ENCODE measurements at regions of chr10 and their contacts with region 1.

Region 1: GRCh38 chr10:100046021-100046486 is 35.6 kb downstream of the CPN1 start:
- DNase-seq: peak; percentile 61 to 98 (median 86)
- ATAC-seq: peak; percentile 86 to 96 (median 92)
- H3K4me3 ChIP-seq: no peak overlapping the region
- H3K27ac ChIP-seq: no peak overlapping the region
- H3K4me1 ChIP-seq: no peaks in the 10 kb centered on the region
- H3K27me3 ChIP-seq: no peaks in the 10 kb centered on the region
- CTCF ChIP-seq: peak; percentile 88 to 98 (median 96)

Region 2: DNA sequence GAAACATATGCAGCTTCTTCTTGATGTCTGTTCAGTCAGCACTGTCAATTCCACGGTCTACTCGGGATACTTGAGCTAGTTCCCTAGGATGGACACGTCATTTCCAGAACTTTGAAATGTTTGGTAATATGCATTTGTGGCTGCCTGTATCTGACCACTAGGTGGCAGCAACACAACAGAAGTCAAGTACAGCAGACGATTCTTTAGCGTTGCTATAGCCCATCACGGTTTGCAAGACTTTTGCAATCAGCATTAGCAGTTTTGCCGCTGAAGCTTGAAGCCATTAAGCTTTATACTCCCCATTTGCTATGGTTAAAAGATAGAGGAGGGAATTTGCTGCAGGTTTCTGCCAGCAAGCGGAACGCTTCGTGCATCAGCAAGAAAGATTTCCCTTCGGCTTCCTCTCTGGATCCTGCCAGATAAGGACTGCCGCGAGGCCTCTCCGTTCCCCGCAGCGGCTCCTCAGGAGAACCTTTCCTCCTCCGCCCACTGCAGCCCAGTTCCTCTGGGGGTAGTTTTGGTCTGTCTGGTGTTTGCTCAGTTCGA is 200.1 kb before region 1 on chr10:
- intact Hi-C with region 1: loop called (anchors 2 to 10 kb)
- DNase-seq: peak in 5 of 6 donors; percentile 65 to 81 (median 67)
- ATAC-seq: peak; percentile 90 to 99 (median 97)
- H3K4me3 ChIP-seq: peak overlapping the region in 1 of 4 donors; percentile 24
- H3K27ac ChIP-seq: no peak overlapping the region
- H3K4me1 ChIP-seq: peaks cover 0 to 2% (median 0%) of the 10 kb centered on the region in 3 donors
- H3K27me3 ChIP-seq: no peaks in the 10 kb centered on the region
- CTCF ChIP-seq: peak; percentile 78 to 95 (median 90)

Region 3: GRCh38 chr10:100297242-100297641 is 251.2 kb after region 1 on chr10:
- intact Hi-C with region 1: no loop called
- DNase-seq: no peak
- ATAC-seq: no peak
- H3K4me3 ChIP-seq: no peak overlapping the region
- H3K27ac ChIP-seq: no peak overlapping the region
- H3K4me1 ChIP-seq: no peaks in the 10 kb centered on the region
- H3K27me3 ChIP-seq: no peaks in the 10 kb centered on the region
- CTCF ChIP-seq: no peak